ENCODE measurements at regions of chr1 and their contacts with region 1.

Region 1: GRCh38 chr1:85607126-85607912 is 26.8 kb downstream of the CCN1 start:
- DNase-seq: peak; percentile 99
- ATAC-seq: peak; percentile 84
- H3K4me3 ChIP-seq: no peak overlapping the region
- H3K27ac ChIP-seq: peak overlapping the region; percentile 85
- H3K4me1 ChIP-seq: peaks cover 58% of the 10 kb centered on the region
- H3K27me3 ChIP-seq: no peaks in the 10 kb centered on the region
- CTCF ChIP-seq: no peak

Region 2: GRCh38 chr1:85569122-85569521 is 38.2 kb before region 1 on chr1:
- CTCF ChIA-PET with region 1: no interaction called
- POLR2A ChIA-PET with region 1: no interaction called
- intact Hi-C with region 1: no loop called
- DNase-seq: peak; percentile 59
- ATAC-seq: peak; percentile 56
- H3K4me3 ChIP-seq: no peak overlapping the region
- H3K27ac ChIP-seq: no peak overlapping the region
- H3K4me1 ChIP-seq: peaks cover 48% of the 10 kb centered on the region
- H3K27me3 ChIP-seq: no peaks in the 10 kb centered on the region
- CTCF ChIP-seq: no peak

Region 3: DNA sequence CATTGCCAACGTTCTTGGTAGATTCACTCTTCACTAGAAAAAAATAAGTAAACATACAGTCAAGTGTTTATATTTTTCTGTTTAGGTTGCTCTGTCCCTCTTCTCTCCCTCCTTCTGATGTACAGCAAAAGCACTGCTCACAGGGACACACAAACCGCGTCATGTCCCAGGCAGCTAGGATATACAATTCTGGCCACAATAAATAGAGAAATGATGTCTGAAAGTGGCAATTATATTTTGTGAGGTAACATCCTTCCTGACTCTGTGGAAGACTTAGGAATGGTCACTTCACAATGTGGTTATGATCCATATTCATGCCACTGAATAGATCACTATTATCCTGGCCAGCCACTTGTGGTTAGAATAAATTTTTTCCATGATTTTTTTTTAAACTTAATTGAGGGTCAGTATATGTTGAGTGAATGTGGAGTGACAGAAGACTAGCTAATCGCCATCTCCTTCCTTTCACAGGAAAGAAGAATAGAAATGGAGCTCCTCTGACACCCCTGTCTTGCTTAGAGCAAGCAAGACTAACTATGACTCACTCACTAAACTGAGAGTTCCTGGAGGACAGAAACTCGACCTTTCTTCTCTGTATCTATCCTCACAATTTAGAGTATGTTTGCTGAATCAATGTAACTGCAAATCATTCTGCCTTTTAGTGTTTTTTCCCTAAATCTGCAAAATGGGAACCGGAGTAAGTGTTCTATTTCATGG is 46.9 kb after region 1 on chr1:
- CTCF ChIA-PET with region 1: no interaction called
- POLR2A ChIA-PET with region 1: no interaction called
- intact Hi-C with region 1: loop called (anchors 2 kb)
- DNase-seq: peak; percentile 82
- ATAC-seq: peak; percentile 81
- H3K4me3 ChIP-seq: 0 out of 2 replicates have a peak overlapping the region, but pooled peaks have one; percentile 4
- H3K27ac ChIP-seq: peak overlapping the region; percentile 81
- H3K4me1 ChIP-seq: peaks cover 43% of the 10 kb centered on the region
- H3K27me3 ChIP-seq: no peaks in the 10 kb centered on the region
- CTCF ChIP-seq: no peak

Region 4: GRCh38 chr1:85746777-85747176 is 139.5 kb after region 1 on chr1:
- CTCF ChIA-PET with region 1: no interaction called
- POLR2A ChIA-PET with region 1: no interaction called
- intact Hi-C with region 1: no loop called
- DNase-seq: no peak
- ATAC-seq: no peak
- H3K4me3 ChIP-seq: no peak overlapping the region
- H3K27ac ChIP-seq: no peak overlapping the region
- H3K4me1 ChIP-seq: no peaks in the 10 kb centered on the region
- H3K27me3 ChIP-seq: no peaks in the 10 kb centered on the region
- CTCF ChIP-seq: peak; percentile 22; the same call in 1 of the 2 replicates

Region 5: GRCh38 chr1:85857991-85858390 is 250.7 kb after region 1 on chr1:
- CTCF ChIA-PET with region 1: no interaction called
- POLR2A ChIA-PET with region 1: no interaction called
- intact Hi-C with region 1: no loop called
- DNase-seq: no peak
- ATAC-seq: no peak
- H3K4me3 ChIP-seq: no peak overlapping the region
- H3K27ac ChIP-seq: no peak overlapping the region
- H3K4me1 ChIP-seq: no peaks in the 10 kb centered on the region
- H3K27me3 ChIP-seq: no peaks in the 10 kb centered on the region
- CTCF ChIP-seq: no peak